ENCODE measurements at regions of chr20 and their contacts with region 1.

Region 1: GRCh38 chr20:34129518-34130162 is 17.6 kb upstream of the EIF2S2 start:
- DNase-seq: peak in 8 of 9 experiments; percentile 21 to 83 (median 54)
- ATAC-seq: peak; percentile 99
- H3K4me3 ChIP-seq: no peak overlapping the region
- H3K4me3 Mint-ChIP-seq: peak overlapping the region; percentile 60
- H3K27ac ChIP-seq: no peak overlapping the region
- H3K27ac Mint-ChIP-seq: no peak overlapping the region
- H3K4me1 ChIP-seq: no peaks in the 10 kb centered on the region
- H3K4me1 Mint-ChIP-seq: peaks cover 4% of the 10 kb centered on the region
- H3K27me3 ChIP-seq: no peaks in the 10 kb centered on the region
- H3K27me3 Mint-ChIP-seq: no peaks in the 10 kb centered on the region
- CTCF ChIP-seq: peak; percentile 98

Region 2: DNA sequence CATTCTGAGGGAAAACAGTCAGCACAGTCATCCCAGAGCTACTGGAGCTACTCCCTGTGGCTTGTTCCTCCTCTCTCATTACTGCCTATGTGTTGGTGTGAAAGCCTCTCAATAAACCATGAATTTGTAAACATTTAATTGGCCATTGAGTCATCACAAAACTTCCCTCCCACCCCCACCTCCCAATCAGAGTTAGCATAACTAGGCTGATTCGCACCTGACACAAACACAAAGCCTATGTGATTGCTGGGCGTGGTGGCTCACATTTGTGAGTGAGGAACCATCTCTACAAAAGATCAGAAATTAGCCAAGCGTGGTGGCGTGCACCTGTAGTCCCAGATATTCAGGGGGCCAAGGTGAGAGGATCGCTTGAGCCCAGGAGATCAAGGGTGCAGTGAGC is 668.9 kb before region 1 on chr20:
- CTCF ChIA-PET with region 1: no interaction called
- POLR2A ChIA-PET with region 1: no interaction called
- intact Hi-C with region 1: loop called in 1 of 2 experiments (anchors 1 kb)
- DNase-seq: no peak
- ATAC-seq: no peak
- H3K4me3 ChIP-seq: no peak overlapping the region
- H3K4me3 Mint-ChIP-seq: no peak overlapping the region
- H3K27ac ChIP-seq: no peak overlapping the region
- H3K27ac Mint-ChIP-seq: no peak overlapping the region
- H3K4me1 ChIP-seq: no peaks in the 10 kb centered on the region
- H3K4me1 Mint-ChIP-seq: no peaks in the 10 kb centered on the region
- H3K27me3 ChIP-seq: no peaks in the 10 kb centered on the region
- H3K27me3 Mint-ChIP-seq: no peaks in the 10 kb centered on the region
- CTCF ChIP-seq: no peak

Region 3: DNA sequence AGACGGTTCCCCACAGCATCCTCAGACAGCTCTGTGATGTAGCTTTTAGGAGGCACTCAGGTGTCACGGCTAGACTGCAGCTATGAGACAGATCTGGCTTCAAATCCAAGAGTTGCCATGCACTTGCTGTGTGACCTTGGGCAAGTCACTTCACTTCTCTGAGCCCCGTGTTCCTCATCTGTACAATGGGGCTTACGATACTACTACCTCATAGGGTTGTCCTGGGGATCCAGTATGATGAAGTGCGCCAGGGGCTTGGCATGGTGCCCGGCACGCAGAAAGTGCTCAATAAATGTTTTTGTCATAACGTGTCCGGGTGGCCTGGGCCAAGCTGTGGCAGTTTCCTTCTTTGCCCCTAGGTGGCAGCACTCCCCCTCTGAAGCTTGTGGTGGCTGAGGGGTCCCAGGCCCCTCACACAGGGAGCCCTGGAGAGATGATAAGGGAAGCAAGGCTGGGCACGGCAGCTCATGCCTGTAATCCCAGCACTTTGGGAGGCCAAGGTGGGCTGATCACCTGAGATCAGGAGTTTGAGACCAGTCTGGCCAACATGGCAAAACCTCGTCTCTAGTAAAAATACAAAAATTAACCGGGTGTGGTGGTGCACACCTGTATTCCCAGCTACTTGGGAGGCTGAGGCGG is 337.6 kb before region 1 on chr20:
- CTCF ChIA-PET with region 1: interaction called, 11 read pairs
- POLR2A ChIA-PET with region 1: no interaction called
- intact Hi-C with region 1: loop called in 1 of 2 experiments (anchors 5 kb)
- DNase-seq: peak; percentile 19 to 73 (median 54)
- ATAC-seq: peak; percentile 71
- H3K4me3 ChIP-seq: no peak overlapping the region
- H3K4me3 Mint-ChIP-seq: no peak overlapping the region
- H3K27ac ChIP-seq: no peak overlapping the region
- H3K27ac Mint-ChIP-seq: no peak overlapping the region
- H3K4me1 ChIP-seq: no peaks in the 10 kb centered on the region
- H3K4me1 Mint-ChIP-seq: peaks cover 10% of the 10 kb centered on the region
- H3K27me3 ChIP-seq: no peaks in the 10 kb centered on the region
- H3K27me3 Mint-ChIP-seq: no peaks in the 10 kb centered on the region
- CTCF ChIP-seq: peak; percentile 82

Region 4: GRCh38 chr20:33862709-33863403 is 266.8 kb before region 1 on chr20:
- CTCF ChIA-PET with region 1: interaction called, 6 read pairs
- POLR2A ChIA-PET with region 1: no interaction called
- intact Hi-C with region 1: loop called in 1 of 2 experiments (anchors 1 kb)
- DNase-seq: peak in 8 of 9 experiments; percentile 25 to 63 (median 54)
- ATAC-seq: peak; percentile 54
- H3K4me3 ChIP-seq: no peak overlapping the region
- H3K4me3 Mint-ChIP-seq: no peak overlapping the region
- H3K27ac ChIP-seq: no peak overlapping the region
- H3K27ac Mint-ChIP-seq: no peak overlapping the region
- H3K4me1 ChIP-seq: peaks cover 28% of the 10 kb centered on the region
- H3K4me1 Mint-ChIP-seq: peaks cover 23% of the 10 kb centered on the region
- H3K27me3 ChIP-seq: no peaks in the 10 kb centered on the region
- H3K27me3 Mint-ChIP-seq: no peaks in the 10 kb centered on the region
- CTCF ChIP-seq: peak; percentile 70

Region 5: DNA sequence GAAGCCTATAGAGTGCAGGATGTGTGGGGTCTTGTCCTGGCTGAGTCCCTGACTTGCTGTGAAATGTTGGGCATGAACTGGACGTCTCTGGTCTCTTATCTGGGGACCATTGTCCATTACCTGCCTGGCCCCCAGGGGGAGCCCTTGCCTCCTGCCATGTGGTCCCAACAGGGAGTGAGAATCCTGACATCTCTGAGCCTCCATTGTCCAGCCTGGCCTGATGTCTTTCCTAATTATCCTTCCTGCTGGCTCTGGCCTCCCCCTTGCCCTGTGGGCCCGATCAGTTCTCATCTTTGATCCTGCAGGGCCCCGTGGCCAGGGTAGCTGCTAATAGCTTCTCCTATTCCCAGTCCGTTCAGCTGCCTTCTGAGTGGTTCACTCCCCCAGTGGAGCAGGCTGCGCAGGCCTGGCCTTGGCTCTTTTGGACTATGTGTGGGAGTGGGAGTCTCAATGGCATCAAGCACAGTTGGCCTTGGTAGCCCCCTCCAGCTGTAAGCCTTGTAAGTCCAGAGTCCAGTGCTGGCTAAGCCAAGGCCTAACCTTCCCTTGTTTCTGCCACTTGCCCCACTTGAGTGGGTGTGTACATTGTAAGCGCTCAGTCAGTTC is 213.8 kb before region 1 on chr20:
- CTCF ChIA-PET with region 1: interaction called, 21 read pairs
- POLR2A ChIA-PET with region 1: no interaction called
- intact Hi-C with region 1: loop called (anchors 1 kb)
- DNase-seq: peak; percentile 24 to 70 (median 57)
- ATAC-seq: peak; percentile 53
- H3K4me3 ChIP-seq: no peak overlapping the region
- H3K4me3 Mint-ChIP-seq: no peak overlapping the region
- H3K27ac ChIP-seq: no peak overlapping the region
- H3K27ac Mint-ChIP-seq: no peak overlapping the region
- H3K4me1 ChIP-seq: no peaks in the 10 kb centered on the region
- H3K4me1 Mint-ChIP-seq: peaks cover 12% of the 10 kb centered on the region
- H3K27me3 ChIP-seq: no peaks in the 10 kb centered on the region
- H3K27me3 Mint-ChIP-seq: peaks cover 1% of the 10 kb centered on the region
- CTCF ChIP-seq: peak; percentile 63

Region 6: DNA sequence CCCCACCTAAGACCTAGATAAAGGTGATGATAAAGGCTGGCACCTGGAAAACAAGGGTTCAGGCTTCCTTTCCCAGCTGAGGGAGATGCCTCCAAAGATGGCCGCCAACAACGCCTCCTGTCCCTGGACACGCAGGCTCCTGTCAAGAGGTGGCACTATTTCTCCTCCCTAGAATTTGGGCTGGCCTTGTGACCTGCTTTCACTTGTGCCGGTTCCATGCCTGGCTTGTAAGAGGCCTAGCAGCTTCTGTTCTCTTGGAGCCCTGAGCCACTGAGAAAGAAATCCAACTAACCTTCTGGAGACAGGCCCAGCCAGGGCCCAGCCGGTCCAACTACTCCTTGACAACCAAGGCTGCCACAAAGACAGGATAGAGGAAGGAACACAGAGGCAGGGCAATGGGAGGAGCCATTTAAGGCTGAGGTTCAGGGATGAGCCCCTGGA is 196.2 kb before region 1 on chr20:
- CTCF ChIA-PET with region 1: interaction called, 22 read pairs
- POLR2A ChIA-PET with region 1: no interaction called
- intact Hi-C with region 1: loop called in 1 of 2 experiments (anchors 1 kb)
- DNase-seq: peak; percentile 6 to 71 (median 43)
- ATAC-seq: peak; percentile 62
- H3K4me3 ChIP-seq: no peak overlapping the region
- H3K4me3 Mint-ChIP-seq: no peak overlapping the region
- H3K27ac ChIP-seq: no peak overlapping the region
- H3K27ac Mint-ChIP-seq: no peak overlapping the region
- H3K4me1 ChIP-seq: no peaks in the 10 kb centered on the region
- H3K4me1 Mint-ChIP-seq: no peaks in the 10 kb centered on the region
- H3K27me3 ChIP-seq: no peaks in the 10 kb centered on the region
- H3K27me3 Mint-ChIP-seq: no peaks in the 10 kb centered on the region
- CTCF ChIP-seq: no peak

Measured in CD8-positive, alpha-beta T cell (primary cell).